ENCODE measurements at regions of chr7 and their contacts with region 1.

Region 1: GRCh38 chr7:105013221-105013815 is 687 bp upstream of the KMT2E start:
- DNase-seq: peak; percentile 95
- H3K4me3 Mint-ChIP-seq: peak overlapping the region; percentile 100
- H3K27ac Mint-ChIP-seq: peak overlapping the region; percentile 100
- H3K4me1 Mint-ChIP-seq: peaks cover 28% of the 10 kb centered on the region
- H3K27me3 Mint-ChIP-seq: no peaks in the 10 kb centered on the region
- CTCF ChIP-seq: peak; percentile 42

Region 2: DNA sequence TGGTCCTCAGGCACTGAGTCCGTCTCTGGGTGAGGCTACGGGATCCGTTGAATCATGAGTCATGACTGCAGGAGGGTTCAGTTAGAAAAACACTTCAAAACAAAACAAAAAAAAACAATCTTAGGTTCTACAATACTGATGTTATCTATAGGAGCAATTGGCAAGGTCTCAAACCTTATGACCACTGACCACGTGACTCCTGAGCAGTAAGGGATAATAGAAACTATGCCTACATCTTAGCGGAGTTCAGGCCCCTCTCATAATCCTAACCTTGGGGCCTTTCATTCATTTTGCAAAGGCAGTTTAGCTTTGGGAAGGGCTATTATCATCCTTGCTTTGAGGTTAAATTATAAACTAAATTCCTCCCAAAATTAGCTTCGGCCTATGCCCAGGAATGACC is 406.5 kb before region 1 on chr7:
- CTCF ChIA-PET with region 1: no interaction called
- POLR2A ChIA-PET with region 1: no interaction called
- intact Hi-C with region 1: no loop called
- DNase-seq: no peak
- H3K4me3 Mint-ChIP-seq: no peak overlapping the region
- H3K27ac Mint-ChIP-seq: no peak overlapping the region
- H3K4me1 Mint-ChIP-seq: no peaks in the 10 kb centered on the region
- H3K27me3 Mint-ChIP-seq: no peaks in the 10 kb centered on the region
- CTCF ChIP-seq: no peak

Region 3: DNA sequence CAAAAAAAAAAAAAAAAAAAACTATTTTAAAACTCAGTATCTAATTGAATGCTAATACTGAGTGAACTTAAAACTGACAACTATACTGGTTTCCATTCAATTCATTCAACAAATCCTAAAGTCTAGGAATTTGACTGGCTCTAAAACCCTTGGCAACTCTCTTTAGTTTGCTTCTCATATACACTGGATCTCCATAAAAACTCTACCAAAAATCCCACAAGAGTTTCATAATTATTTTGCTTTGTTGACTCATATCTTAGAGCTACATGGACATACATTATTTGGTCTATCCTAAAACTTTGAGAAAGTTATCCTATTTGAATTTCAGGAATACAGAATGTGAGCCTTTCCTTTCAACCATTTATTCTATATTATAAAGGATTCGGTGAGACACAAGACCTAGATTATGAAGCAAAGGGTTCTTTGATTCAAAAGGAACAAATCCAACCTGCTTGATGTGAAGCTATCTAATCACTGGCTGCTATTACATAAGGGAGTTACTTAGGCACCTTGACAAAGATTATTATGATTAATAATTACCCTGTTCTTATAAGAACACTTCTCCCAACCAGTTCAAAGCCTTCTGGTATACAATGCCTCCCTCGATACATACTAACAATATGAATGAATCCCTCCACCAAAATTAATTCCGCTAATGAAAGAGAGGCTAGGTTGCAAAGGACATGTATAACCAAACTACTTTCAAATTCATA is 15.1 kb before region 1 on chr7:
- CTCF ChIA-PET with region 1: interaction called, 4 read pairs
- POLR2A ChIA-PET with region 1: interaction called, 620 read pairs
- intact Hi-C with region 1: no loop called
- DNase-seq: no peak
- H3K4me3 Mint-ChIP-seq: no peak overlapping the region
- H3K27ac Mint-ChIP-seq: peak overlapping the region; percentile 35
- H3K4me1 Mint-ChIP-seq: peaks cover 31% of the 10 kb centered on the region
- H3K27me3 Mint-ChIP-seq: no peaks in the 10 kb centered on the region
- CTCF ChIP-seq: no peak

Region 4: GRCh38 chr7:105024743-105025142 is 11.4 kb after region 1 on chr7:
- CTCF ChIA-PET with region 1: interaction called, 4 read pairs
- POLR2A ChIA-PET with region 1: interaction called, 59 read pairs
- intact Hi-C with region 1: no loop called
- DNase-seq: peak; percentile 59
- H3K4me3 Mint-ChIP-seq: no peak overlapping the region
- H3K27ac Mint-ChIP-seq: peak overlapping the region; percentile 19
- H3K4me1 Mint-ChIP-seq: peaks cover 38% of the 10 kb centered on the region
- H3K27me3 Mint-ChIP-seq: no peaks in the 10 kb centered on the region
- CTCF ChIP-seq: no peak

Region 5: DNA sequence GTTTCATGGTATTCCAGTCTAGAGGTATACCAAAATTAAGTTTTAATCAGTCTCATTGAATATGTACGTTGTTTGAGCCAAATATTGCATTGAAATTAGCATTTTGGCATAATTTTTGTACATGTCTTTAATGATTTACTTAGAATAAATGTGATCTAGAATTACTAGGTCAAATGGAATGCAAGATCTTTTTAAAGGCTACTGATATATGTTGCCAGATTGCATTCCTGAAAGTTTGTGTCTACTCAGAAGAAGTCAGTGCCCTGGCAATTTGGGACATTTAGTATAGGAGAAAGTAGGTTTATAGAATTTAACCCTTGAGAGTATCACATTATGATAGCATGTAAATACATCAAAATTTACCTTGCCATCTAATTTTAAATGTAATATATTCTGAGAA is 33.1 kb after region 1 on chr7:
- CTCF ChIA-PET with region 1: interaction called, 5 read pairs
- POLR2A ChIA-PET with region 1: interaction called, 11 read pairs
- intact Hi-C with region 1: no loop called
- DNase-seq: no peak
- H3K4me3 Mint-ChIP-seq: no peak overlapping the region
- H3K27ac Mint-ChIP-seq: peak overlapping the region; percentile 37
- H3K4me1 Mint-ChIP-seq: peaks cover 13% of the 10 kb centered on the region
- H3K27me3 Mint-ChIP-seq: no peaks in the 10 kb centered on the region
- CTCF ChIP-seq: no peak

Region 6: GRCh38 chr7:105387621-105388372 is 374.5 kb after region 1 on chr7:
- CTCF ChIA-PET with region 1: no interaction called
- POLR2A ChIA-PET with region 1: interaction called, 10 read pairs
- intact Hi-C with region 1: no loop called
- DNase-seq: peak; percentile 72
- H3K4me3 Mint-ChIP-seq: peak overlapping the region; percentile 82
- H3K27ac Mint-ChIP-seq: peak overlapping the region; percentile 63
- H3K4me1 Mint-ChIP-seq: no peaks in the 10 kb centered on the region
- H3K27me3 Mint-ChIP-seq: no peaks in the 10 kb centered on the region
- CTCF ChIP-seq: no peak

Region 7: GRCh38 chr7:105591522-105591921 is 578.2 kb after region 1 on chr7:
- CTCF ChIA-PET with region 1: no interaction called
- POLR2A ChIA-PET with region 1: no interaction called
- intact Hi-C with region 1: no loop called
- DNase-seq: no peak
- H3K4me3 Mint-ChIP-seq: no peak overlapping the region
- H3K27ac Mint-ChIP-seq: no peak overlapping the region
- H3K4me1 Mint-ChIP-seq: no peaks in the 10 kb centered on the region
- H3K27me3 Mint-ChIP-seq: no peaks in the 10 kb centered on the region
- CTCF ChIP-seq: no peak

Measured in MCF 10A (cell line).